Cardiac septum (tissue), 1 donor: ENCODE measurements at regions of chr1 and their contacts with region 1.

Region 1: DNA sequence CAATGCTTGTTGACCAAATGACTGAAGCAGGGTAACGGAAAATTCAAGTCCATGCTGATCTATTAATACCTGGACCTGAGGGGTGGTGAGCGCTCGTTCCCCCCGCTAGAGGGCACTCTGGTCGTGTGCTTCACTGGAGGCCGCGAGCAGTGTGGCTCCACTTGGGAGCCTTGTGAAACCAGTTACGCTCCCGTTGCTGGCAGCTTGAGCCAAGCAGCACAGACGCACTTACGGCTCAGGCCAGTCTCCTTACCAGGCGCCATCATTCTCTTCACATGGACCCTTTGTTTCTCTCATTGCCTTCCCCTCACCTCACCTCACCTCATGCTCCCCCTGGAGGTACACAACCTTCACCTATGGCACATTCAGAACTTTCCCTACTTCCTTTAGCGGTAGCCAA is 49.7 kb upstream of the TSPAN2 start:
- DNase-seq: peak; percentile 89

Region 2: DNA sequence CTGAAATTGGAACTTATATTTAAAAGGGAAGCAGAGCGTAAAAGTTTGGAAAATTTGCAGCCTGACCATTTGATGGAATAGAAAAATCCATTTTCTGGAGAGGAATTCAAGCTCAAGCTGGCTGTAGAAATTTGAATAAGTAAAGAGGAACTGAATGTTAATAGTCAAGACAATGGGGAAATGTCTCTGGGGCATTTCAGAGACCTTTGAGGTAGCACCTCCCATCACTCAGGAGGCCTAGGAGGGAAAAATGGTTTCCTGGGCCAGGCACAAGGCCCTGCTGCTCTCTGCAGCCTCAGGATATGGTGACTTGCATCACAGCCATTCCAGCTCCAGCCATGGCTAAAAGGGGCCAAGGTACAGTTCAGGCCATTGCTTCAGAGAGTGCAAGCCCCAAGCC is 127.0 kb before region 1 on chr1:
- intact Hi-C with region 1: no loop called
- DNase-seq: no peak

Region 3: GRCh38 chr1:115275212-115275611 is 136.2 kb after region 1 on chr1:
- intact Hi-C with region 1: loop called (anchors 5 kb)
- DNase-seq: no peak

Region 4: GRCh38 chr1:115364046-115364775 is 225.2 kb after region 1 on chr1:
- intact Hi-C with region 1: loop called (anchors 1 kb)
- DNase-seq: no peak

Region 5: GRCh38 chr1:115506926-115507589 is 368.1 kb after region 1 on chr1:
- intact Hi-C with region 1: loop called (anchors 2 kb)
- DNase-seq: no peak